A673 (cell line): ENCODE measurements at regions of chr15 and their contacts with region 1.

Region 1: DNA sequence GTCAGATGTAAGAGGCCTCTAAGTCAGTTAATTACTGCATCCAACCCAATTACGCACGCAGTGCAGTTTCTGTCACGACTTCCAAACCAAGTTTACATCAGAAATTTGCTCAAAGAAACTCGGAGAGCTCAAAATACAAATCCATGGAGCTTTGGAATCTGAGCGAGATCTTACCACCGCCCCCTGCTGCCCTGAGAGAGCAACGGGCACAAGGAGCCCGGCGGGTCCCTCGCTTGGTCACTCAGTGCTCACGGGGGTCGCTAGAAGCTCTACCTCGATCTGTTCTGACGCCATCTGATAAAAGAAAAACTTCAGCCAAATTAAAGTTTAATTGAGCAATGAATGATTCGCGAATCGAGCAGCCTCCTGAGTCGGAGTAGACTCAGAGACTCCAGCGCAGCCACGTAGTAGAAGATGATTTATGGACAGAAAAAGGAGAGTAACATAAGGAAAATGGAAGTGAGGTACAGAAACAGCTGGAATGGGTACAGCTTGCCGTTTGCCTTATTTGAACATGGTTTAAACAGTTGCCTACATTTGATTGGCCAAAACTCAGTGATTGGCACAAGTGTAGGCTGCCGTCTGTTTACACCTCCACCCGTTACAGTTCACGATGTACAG is 232.7 kb upstream of the ATP10A start:
- DNase-seq: no peak
- H3K4me3 ChIP-seq: no peak overlapping the region
- H3K27ac ChIP-seq: no peak overlapping the region
- H3K4me1 ChIP-seq: no peaks in the 10 kb centered on the region
- H3K27me3 ChIP-seq: no peaks in the 10 kb centered on the region
- CTCF ChIP-seq: no peak

Region 2: GRCh38 chr15:24772686-24773373 is 1323.0 kb before region 1 on chr15:
- CTCF ChIA-PET with region 1: no interaction called
- POLR2A ChIA-PET with region 1: no interaction called
- intact Hi-C with region 1: loop called (anchors 10 kb)
- DNase-seq: no peak
- H3K4me3 ChIP-seq: no peak overlapping the region
- H3K27ac ChIP-seq: no peak overlapping the region
- H3K4me1 ChIP-seq: no peaks in the 10 kb centered on the region
- H3K27me3 ChIP-seq: no peaks in the 10 kb centered on the region
- CTCF ChIP-seq: no peak

Region 3: DNA sequence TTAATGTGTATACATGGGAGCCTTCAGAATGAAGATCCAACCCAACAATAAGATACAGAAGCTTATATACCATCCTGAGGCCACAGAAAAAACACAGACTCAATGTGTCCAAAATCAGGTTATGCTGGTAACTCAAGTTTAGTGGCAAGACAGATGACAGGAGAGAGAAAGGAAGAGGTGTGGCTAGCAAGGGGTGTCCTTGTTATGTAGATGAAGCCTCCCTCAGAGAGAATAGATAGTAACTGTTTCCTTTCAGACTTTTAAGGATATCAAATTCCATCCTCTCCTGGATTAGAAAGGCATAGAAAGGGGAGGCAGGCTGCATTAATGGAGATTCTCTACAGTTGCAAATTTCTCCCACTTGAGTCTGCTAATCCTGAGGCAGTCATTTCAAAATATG is 229.7 kb after region 1 on chr15:
- CTCF ChIA-PET with region 1: no interaction called
- POLR2A ChIA-PET with region 1: no interaction called
- intact Hi-C with region 1: no loop called
- DNase-seq: no peak
- H3K4me3 ChIP-seq: no peak overlapping the region
- H3K27ac ChIP-seq: no peak overlapping the region
- H3K4me1 ChIP-seq: no peaks in the 10 kb centered on the region
- H3K27me3 ChIP-seq: no peaks in the 10 kb centered on the region
- CTCF ChIP-seq: no peak